Activated CD4-positive, alpha-beta memory T cell treated with anti-CD3 and anti-CD28 coated beads, Interleukin-2, amount 10 ng/mL, durations not matched to agents 7 days and 5 days (primary cell): ENCODE measurements at regions of chr10 and their contacts with region 1.

Region 1: GRCh38 chr10:109883859-109884771 is 39.2 kb downstream of the XPNPEP1 start:
- DNase-seq: peak; percentile 67
- H3K4me3 Mint-ChIP-seq: no peak overlapping the region
- H3K27ac Mint-ChIP-seq: no peak overlapping the region
- H3K4me1 Mint-ChIP-seq: peaks cover 29% of the 10 kb centered on the region
- H3K27me3 Mint-ChIP-seq: no peaks in the 10 kb centered on the region

Region 2: DNA sequence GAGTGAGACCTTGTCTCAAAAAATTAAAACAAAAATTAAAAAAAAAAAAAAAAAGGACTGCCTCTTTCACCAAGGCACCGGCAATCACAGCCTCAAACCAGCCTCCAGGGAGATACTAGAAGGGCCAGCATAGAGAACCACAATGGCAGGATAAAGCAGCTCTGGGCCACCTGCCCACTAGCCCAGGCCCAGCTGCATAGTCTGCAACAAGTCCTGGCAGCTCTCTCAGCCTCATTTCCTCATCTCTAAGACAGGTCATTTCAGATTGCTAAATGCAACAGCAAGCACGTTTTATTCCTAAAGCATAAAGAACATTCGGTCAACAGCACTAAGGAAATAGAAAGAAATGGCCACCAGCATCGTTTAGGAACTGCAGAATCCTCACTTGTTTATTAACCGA is 10.4 kb after region 1 on chr10:
- CTCF ChIA-PET with region 1: interaction called, 16 read pairs
- POLR2A ChIA-PET with region 1: interaction called, 3 read pairs
- DNase-seq: no peak
- H3K4me3 Mint-ChIP-seq: no peak overlapping the region
- H3K27ac Mint-ChIP-seq: peak overlapping the region; percentile 13
- H3K4me1 Mint-ChIP-seq: peaks cover 36% of the 10 kb centered on the region
- H3K27me3 Mint-ChIP-seq: no peaks in the 10 kb centered on the region

Region 3: GRCh38 chr10:109914966-109915365 is 30.9 kb after region 1 on chr10:
- CTCF ChIA-PET with region 1: interaction called, 21 read pairs
- POLR2A ChIA-PET with region 1: interaction called, 5 read pairs
- DNase-seq: peak; percentile 51
- H3K4me3 Mint-ChIP-seq: no peak overlapping the region
- H3K27ac Mint-ChIP-seq: peak overlapping the region; percentile 74
- H3K4me1 Mint-ChIP-seq: peaks cover 77% of the 10 kb centered on the region
- H3K27me3 Mint-ChIP-seq: no peaks in the 10 kb centered on the region

Region 4: GRCh38 chr10:109956454-109957091 is 72.5 kb after region 1 on chr10:
- CTCF ChIA-PET with region 1: interaction called, 13 read pairs
- POLR2A ChIA-PET with region 1: no interaction called
- DNase-seq: peak; percentile 18
- H3K4me3 Mint-ChIP-seq: no peak overlapping the region
- H3K27ac Mint-ChIP-seq: no peak overlapping the region
- H3K4me1 Mint-ChIP-seq: peaks cover 2% of the 10 kb centered on the region
- H3K27me3 Mint-ChIP-seq: peaks cover 6% of the 10 kb centered on the region

Region 5: GRCh38 chr10:110007701-110008517 is 123.8 kb after region 1 on chr10 and contains the start of gene ADD3:
- CTCF ChIA-PET with region 1: interaction called, 15 read pairs
- POLR2A ChIA-PET with region 1: interaction called, 4 read pairs
- DNase-seq: peak; percentile 89
- H3K4me3 Mint-ChIP-seq: no peak within 1 kb of the TSS
- H3K27ac Mint-ChIP-seq: peak within 1 kb of the TSS; percentile 88
- H3K4me1 Mint-ChIP-seq: peaks cover 38% of the 10 kb centered on the region
- H3K27me3 Mint-ChIP-seq: no peaks in the 10 kb centered on the region
- total RNA-seq, gene ADD3: 400 to 401 TPM

Region 6: GRCh38 chr10:110279407-110279986 is 395.4 kb after region 1 on chr10:
- CTCF ChIA-PET with region 1: interaction called, 14 read pairs
- POLR2A ChIA-PET with region 1: no interaction called
- DNase-seq: peak; percentile 44
- H3K4me3 Mint-ChIP-seq: no peak overlapping the region
- H3K27ac Mint-ChIP-seq: no peak overlapping the region
- H3K4me1 Mint-ChIP-seq: peaks cover 29% of the 10 kb centered on the region
- H3K27me3 Mint-ChIP-seq: peaks cover 3% of the 10 kb centered on the region